Aorta (tissue), 5 donors: ENCODE measurements at regions of chr2 and their contacts with region 1.

Region 1: DNA sequence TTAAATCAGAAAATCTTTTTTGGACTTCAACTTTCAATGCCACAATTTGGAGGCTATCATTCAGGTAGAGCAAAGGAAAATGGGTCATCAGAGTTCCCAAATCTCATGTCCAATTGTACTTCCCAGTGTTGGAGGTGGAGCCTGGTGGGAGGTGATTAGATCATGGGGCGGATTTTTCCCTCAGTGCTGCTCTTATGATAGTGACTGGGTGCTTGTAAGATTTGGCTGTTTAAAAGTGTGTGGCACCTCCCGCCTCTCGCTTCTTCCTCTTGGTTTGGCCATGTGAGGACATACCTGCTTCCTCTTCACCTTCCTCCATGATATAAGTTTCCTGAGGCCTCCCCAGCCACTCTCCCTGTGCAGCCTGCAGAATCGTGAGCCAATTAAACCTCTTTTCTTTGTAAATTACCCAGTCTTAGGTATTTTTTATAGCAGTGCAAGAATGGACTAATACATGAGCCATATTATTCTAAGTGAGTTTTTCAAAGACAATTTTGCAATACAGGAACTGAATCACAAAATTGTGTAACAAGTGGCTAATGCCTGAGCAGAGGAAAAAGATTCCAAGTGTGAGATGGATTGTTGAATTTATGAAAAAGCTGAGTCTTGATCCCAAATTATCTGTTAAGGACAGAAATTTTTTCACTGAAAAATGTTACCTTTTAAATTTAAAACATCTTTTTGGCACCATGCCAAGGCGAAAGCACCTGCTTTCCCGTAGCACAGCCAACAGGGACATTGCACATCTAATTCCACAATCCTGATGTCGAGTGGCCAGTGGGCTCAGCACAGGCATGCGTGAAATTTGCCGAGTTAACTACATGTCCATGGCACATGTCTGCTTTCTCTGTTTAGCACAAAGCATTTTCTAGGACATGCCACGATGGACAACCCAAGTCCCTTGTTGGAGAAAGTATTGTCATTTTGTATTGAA is 150.9 kb downstream of the COL6A3 start:
- DNase-seq: no peak
- ATAC-seq: peak; percentile 63
- H3K4me3 ChIP-seq: no peak overlapping the region
- H3K27ac ChIP-seq: no peak overlapping the region
- H3K4me1 ChIP-seq: no peaks in the 10 kb centered on the region
- H3K27me3 ChIP-seq: no peaks in the 10 kb centered on the region

Region 2: DNA sequence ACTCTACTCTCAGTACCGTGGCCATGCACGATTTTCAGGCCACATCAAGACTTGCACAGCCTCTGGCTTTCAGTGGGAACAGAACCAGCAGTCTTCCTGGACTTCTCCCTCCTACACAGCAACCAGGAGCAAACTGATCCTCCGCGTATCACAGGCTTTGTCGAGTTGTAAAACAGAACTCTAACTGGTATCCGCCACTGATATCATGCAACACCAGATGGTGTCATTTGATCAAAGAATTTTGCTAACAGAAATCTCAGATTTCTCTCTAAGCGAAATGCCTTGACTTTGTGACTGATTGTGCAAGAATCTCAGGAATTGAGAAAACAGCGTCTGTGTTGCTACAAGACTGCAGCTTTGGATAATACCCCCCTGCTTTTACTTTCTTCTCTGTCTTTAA is 91.7 kb before region 1 on chr2:
- intact Hi-C with region 1: loop called in 1 of 2 experiments (anchors 5 kb)
- DNase-seq: no peak
- ATAC-seq: peak; percentile 91
- H3K4me3 ChIP-seq: peak overlapping the region in 1 of 2 donors; percentile 41
- H3K27ac ChIP-seq: peak overlapping the region in 1 of 2 donors; percentile 86
- H3K4me1 ChIP-seq: peaks cover 0 to 2% of the 10 kb centered on the region in 2 donors
- H3K27me3 ChIP-seq: no peaks in the 10 kb centered on the region